Aorta (tissue), 5 donors: ENCODE measurements at regions of chrX and their contacts with region 1.

Region 1: GRCh38 chrX:18899796-18900447 is 84.0 kb downstream of the PHKA2 start:
- DNase-seq: peak in 1 of 2 donors; percentile 69
- ATAC-seq: no peak
- H3K4me3 ChIP-seq: no peak overlapping the region
- H3K27ac ChIP-seq: no peak overlapping the region
- H3K4me1 ChIP-seq: no peaks in the 10 kb centered on the region
- H3K27me3 ChIP-seq: no peaks in the 10 kb centered on the region

Region 2: DNA sequence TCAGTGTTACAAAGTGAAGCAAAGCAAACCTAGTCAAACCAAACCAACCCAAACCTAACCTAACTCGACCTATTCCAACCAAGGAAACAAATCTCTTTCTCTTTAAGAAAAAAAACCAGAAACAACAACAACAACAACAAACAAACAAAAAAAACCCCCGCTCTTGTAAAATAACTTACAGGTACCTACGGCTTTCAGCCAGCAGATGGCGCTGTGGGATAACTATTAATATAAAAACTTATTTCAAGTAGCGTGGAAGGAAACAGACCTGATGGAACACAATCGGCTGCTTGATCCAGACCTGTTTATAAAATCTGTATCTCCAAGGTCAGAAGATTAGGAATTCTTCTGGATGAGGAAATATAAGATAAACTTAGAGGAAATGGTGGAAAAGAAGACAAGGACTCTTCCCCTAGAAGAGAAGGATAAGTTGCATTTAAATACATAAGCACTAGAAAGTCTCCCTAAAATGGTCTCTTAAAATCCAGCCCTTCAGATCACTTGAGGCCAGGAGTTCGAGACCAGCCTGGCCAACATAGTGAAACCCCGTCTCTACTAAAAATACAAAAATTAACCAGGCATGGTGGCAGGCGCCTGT is 508.9 kb before region 1 on chrX:
- intact Hi-C with region 1: loop called (anchors 5 kb)
- DNase-seq: peak; percentile 69 to 83
- ATAC-seq: peak; percentile 79
- H3K4me3 ChIP-seq: no peak overlapping the region
- H3K27ac ChIP-seq: no peak overlapping the region
- H3K4me1 ChIP-seq: no peaks in the 10 kb centered on the region
- H3K27me3 ChIP-seq: no peaks in the 10 kb centered on the region

Region 3: GRCh38 chrX:18410043-18410442 is 489.9 kb before region 1 on chrX:
- intact Hi-C with region 1: loop called (anchors 5 kb)
- DNase-seq: no peak
- ATAC-seq: no peak
- H3K4me3 ChIP-seq: no peak overlapping the region
- H3K27ac ChIP-seq: no peak overlapping the region
- H3K4me1 ChIP-seq: no peaks in the 10 kb centered on the region
- H3K27me3 ChIP-seq: no peaks in the 10 kb centered on the region

Region 4: DNA sequence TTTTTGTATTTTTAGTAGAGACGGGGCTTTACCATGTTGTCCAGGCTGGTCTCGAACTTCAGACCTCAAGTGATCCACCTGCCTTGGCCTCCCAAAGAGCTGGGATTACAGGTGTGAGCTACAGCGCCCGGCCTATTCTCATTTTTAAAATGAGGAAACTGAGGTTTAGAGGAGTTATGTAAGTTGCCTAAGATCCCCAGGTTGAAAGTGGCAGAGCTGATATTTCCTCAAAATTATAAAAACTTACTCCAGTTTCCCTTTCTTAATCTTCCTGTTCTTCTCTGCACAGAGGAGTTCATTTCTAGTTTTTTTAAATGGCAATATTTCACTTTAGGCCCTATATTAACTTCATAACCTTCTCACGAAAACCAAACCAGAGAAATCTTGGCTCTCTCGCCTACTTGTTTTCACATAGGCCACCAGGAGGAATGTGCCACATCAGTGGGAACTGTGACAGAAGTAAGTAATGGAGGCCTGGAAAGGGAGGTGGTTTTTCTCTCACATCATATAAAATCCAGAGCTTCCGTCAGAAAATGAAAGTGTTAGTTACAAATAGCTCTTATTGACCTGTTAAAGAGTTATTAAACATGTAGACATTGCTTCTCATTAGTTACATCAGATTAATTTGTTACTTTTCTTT is 211.9 kb before region 1 on chrX:
- intact Hi-C with region 1: loop called in 1 of 2 experiments (anchors 5 kb)
- DNase-seq: no peak
- ATAC-seq: no peak
- H3K4me3 ChIP-seq: no peak overlapping the region
- H3K27ac ChIP-seq: no peak overlapping the region
- H3K4me1 ChIP-seq: no peaks in the 10 kb centered on the region
- H3K27me3 ChIP-seq: no peaks in the 10 kb centered on the region

Region 5: GRCh38 chrX:18873189-18873791 is 26.6 kb before region 1 on chrX:
- intact Hi-C with region 1: no loop called
- DNase-seq: peak; percentile 53 to 82
- ATAC-seq: peak; percentile 79
- H3K4me3 ChIP-seq: no peak overlapping the region
- H3K27ac ChIP-seq: peak overlapping the region; percentile 73 to 74
- H3K4me1 ChIP-seq: no peaks in the 10 kb centered on the region
- H3K27me3 ChIP-seq: no peaks in the 10 kb centered on the region

Region 6: GRCh38 chrX:18951032-18951431 is 51.1 kb after region 1 on chrX:
- intact Hi-C with region 1: no loop called
- DNase-seq: no peak
- ATAC-seq: no peak
- H3K4me3 ChIP-seq: no peak overlapping the region
- H3K27ac ChIP-seq: no peak overlapping the region
- H3K4me1 ChIP-seq: no peaks in the 10 kb centered on the region
- H3K27me3 ChIP-seq: no peaks in the 10 kb centered on the region